Activated CD8-positive, alpha-beta memory T cell treated with anti-CD3 and anti-CD28 coated beads, Interleukin-2, amount 10 ng/mL, durations not matched to agents 7 days and 5 days (primary cell): ENCODE measurements at regions of chr18 and their contacts with region 1.

Region 1: GRCh38 chr18:35371412-35372195 is 5.5 kb downstream of the ZNF396 start:
- DNase-seq: no peak
- ATAC-seq: no peak
- H3K4me3 Mint-ChIP-seq: no peak overlapping the region
- H3K27ac Mint-ChIP-seq: no peak overlapping the region
- H3K4me1 Mint-ChIP-seq: peaks cover 11% of the 10 kb centered on the region
- H3K27me3 Mint-ChIP-seq: no peaks in the 10 kb centered on the region

Region 2: DNA sequence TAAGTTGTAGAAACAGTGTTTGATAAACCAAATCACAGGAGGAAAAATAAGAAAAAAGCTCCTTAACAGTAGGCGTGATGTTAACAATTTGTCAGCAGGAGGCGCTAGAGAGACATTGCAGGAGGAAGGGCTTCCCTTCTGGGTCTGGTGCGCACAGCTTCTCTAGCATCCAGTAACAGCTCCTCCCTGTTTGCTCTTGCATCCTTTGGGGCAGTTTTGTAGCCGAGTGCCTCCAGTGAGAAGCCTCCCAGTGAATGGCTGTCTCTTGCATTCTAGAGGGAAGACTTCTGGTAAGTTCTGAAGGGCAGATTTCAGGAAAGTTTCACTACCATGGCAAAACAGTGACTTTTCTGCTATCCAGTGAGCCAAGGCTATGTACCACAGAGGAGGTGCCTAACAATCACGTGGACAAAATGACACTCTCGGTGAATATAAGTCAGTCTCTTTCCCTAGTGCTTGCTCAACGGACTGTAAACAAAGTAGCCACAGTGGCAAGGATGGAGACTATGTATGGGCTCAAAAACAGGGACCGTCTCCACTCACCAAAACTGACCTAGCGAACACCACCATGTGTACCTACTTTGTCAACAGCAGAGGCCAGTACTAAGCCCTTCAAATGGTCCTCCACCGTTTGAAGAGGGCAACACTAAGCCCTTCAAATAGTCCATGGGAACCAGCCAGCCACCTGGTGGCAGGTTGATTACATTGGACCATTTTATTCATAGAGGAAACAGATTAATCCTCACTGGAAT is 15.2 kb after region 1 on chr18:
- CTCF ChIA-PET with region 1: interaction called, 10 read pairs
- DNase-seq: peak; percentile 77
- ATAC-seq: peak; percentile 87
- H3K4me3 Mint-ChIP-seq: no peak overlapping the region
- H3K27ac Mint-ChIP-seq: no peak overlapping the region
- H3K4me1 Mint-ChIP-seq: peaks cover 6% of the 10 kb centered on the region
- H3K27me3 Mint-ChIP-seq: peaks cover 39% of the 10 kb centered on the region